Esophagus squamous epithelium (tissue), 5 donors: ENCODE measurements at regions of chr11 and their contacts with region 1.

Region 1: GRCh38 chr11:68370211-68371111 is 58.1 kb downstream of the LRP5 start:
- DNase-seq: no peak
- H3K4me3 ChIP-seq: no peak overlapping the region
- H3K27ac ChIP-seq: peak overlapping the region; percentile 23 to 91 (median 78)
- H3K4me1 ChIP-seq: peaks cover 21 to 60% (median 34%) of the 10 kb centered on the region in 3 donors
- H3K27me3 ChIP-seq: no peaks in the 10 kb centered on the region
- CTCF ChIP-seq: no peak
- POLR2A ChIP-seq: no peak

Region 2: GRCh38 chr11:68300076-68300830 is 70.2 kb before region 1 on chr11:
- intact Hi-C with region 1: no loop called
- DNase-seq: no peak
- H3K4me3 ChIP-seq: no peak overlapping the region
- H3K27ac ChIP-seq: no peak overlapping the region
- H3K4me1 ChIP-seq: peaks cover 5 to 14% (median 12%) of the 10 kb centered on the region in 3 donors
- H3K27me3 ChIP-seq: peaks cover 0 to 10% (median 0%) of the 10 kb centered on the region in 4 donors
- CTCF ChIP-seq: no peak
- POLR2A ChIP-seq: no peak

Region 3: GRCh38 chr11:68312117-68312779 is 58.2 kb before region 1 on chr11 and contains the start of gene LRP5:
- intact Hi-C with region 1: loop called (anchors 10 kb)
- DNase-seq: no peak
- H3K4me3 ChIP-seq: peak within 1 kb of the TSS; percentile 53 to 79 (median 70)
- H3K27ac ChIP-seq: peak within 1 kb of the TSS; percentile 79 to 90 (median 86)
- H3K4me1 ChIP-seq: peaks cover 24 to 52% (median 29%) of the 10 kb centered on the region in 3 donors
- H3K27me3 ChIP-seq: no peaks in the 10 kb centered on the region
- CTCF ChIP-seq: no peak
- POLR2A ChIP-seq: no peak
- total RNA-seq, gene LRP5: 13.7 to 24.0 (median 20.9) TPM

Region 4: DNA sequence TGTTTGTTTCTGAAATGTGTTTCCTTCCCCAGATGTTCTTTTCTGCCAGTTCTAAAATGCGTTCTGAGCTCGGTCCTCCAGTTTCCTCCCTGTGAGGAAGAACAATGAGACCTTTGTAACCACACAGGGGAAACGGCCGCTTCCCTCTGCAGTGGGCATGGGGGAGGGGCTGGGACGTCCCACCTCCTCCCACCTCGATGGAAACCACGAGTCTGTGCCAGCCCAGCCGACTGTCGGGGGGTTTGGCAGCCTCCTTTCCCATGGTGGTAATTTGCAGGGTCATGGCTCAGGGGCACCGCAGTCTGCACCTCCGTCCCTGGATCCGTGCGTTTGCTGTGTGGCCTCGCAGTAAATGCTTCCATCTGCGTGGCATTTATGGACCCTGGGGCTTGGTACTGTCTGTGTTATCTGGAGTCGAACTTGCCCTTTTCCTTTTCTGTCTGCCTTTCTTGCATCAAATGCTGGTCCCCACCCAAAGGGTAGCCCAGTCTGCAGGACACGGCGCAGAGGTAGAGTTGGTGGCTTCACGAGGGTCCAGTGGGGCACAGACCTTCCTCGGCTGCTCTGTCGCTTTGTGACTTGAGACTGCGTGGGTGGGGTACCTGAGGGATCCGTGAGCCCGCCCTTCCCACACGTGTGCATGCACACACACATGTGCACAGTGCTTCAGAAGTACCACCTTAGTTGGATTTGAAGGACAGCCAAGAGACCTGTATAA is 41.9 kb before region 1 on chr11:
- intact Hi-C with region 1: no loop called
- DNase-seq: no peak
- H3K4me3 ChIP-seq: no peak overlapping the region
- H3K27ac ChIP-seq: peak overlapping the region in 3 of 4 donors; percentile 6 to 83 (median 74)
- H3K4me1 ChIP-seq: peaks cover under 1 to 96% (median 53%) of the 10 kb centered on the region in 3 donors
- H3K27me3 ChIP-seq: no peaks in the 10 kb centered on the region
- CTCF ChIP-seq: no peak
- POLR2A ChIP-seq: no peak

Region 5: GRCh38 chr11:68447015-68447801 is 76.7 kb after region 1 on chr11:
- intact Hi-C with region 1: no loop called
- DNase-seq: no peak
- H3K4me3 ChIP-seq: no peak overlapping the region
- H3K27ac ChIP-seq: no peak overlapping the region
- H3K4me1 ChIP-seq: peaks cover 0 to 8% (median 0%) of the 10 kb centered on the region in 3 donors
- H3K27me3 ChIP-seq: no peaks in the 10 kb centered on the region
- CTCF ChIP-seq: peak; percentile 86 to 93 (median 89)
- POLR2A ChIP-seq: no peak